IMR-90 (cell line): ENCODE measurements at regions of chr2 and their contacts with region 1.

Region 1: GRCh38 chr2:25738383-25739343 is 65.3 kb upstream of the DTNB start:
- DNase-seq: no peak
- ATAC-seq: peak; percentile 35; the same call in 1 of the 2 replicates
- H3K4me3 ChIP-seq: no peak overlapping the region
- H3K27ac ChIP-seq: no peak overlapping the region
- H3K4me1 ChIP-seq: no peaks in the 10 kb centered on the region
- H3K27me3 ChIP-seq: no peaks in the 10 kb centered on the region
- CTCF ChIP-seq: no peak
- POLR2A ChIP-seq: no peak
- RAD21 ChIP-seq: no peak

Region 2: GRCh38 chr2:25707927-25708590 is 30.6 kb before region 1 on chr2:
- CTCF ChIA-PET with region 1: no interaction called
- POLR2A ChIA-PET with region 1: interaction called, 10 read pairs
- dilution Hi-C with region 1: no loop called
- in situ Hi-C with region 1: no loop called
- intact Hi-C with region 1: no loop called
- DNase-seq: no peak
- ATAC-seq: no peak; the same call in 1 of the 2 replicates
- H3K4me3 ChIP-seq: no peak overlapping the region
- H3K27ac ChIP-seq: no peak overlapping the region
- H3K4me1 ChIP-seq: no peaks in the 10 kb centered on the region
- H3K27me3 ChIP-seq: peaks cover 6% of the 10 kb centered on the region
- CTCF ChIP-seq: no peak
- POLR2A ChIP-seq: no peak
- RAD21 ChIP-seq: no peak

Region 3: DNA sequence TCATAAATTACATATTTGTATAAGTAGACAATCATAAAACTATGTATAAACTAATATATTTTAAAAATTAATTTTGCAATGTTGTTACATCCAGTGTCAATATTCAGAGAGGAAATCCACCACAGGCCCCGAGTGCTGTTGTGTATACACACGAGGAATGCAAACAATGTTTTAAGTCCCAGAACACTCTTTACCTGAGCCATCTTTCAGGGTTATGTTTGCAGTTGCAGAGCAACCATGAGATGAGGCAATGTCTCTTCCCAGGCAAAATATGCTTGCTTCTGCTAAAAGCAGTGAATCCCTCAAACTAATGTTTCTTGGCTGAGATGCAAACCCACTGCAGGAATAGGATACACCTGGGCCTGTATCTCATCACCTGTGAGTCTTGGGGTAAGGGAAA is 48.4 kb after region 1 on chr2:
- CTCF ChIA-PET with region 1: no interaction called
- POLR2A ChIA-PET with region 1: no interaction called
- dilution Hi-C with region 1: no loop called
- in situ Hi-C with region 1: no loop called
- intact Hi-C with region 1: no loop called
- DNase-seq: no peak
- ATAC-seq: no peak
- H3K4me3 ChIP-seq: no peak overlapping the region
- H3K27ac ChIP-seq: no peak overlapping the region
- H3K4me1 ChIP-seq: peaks cover 1% of the 10 kb centered on the region; the same call in 1 of the 2 replicates
- H3K27me3 ChIP-seq: no peaks in the 10 kb centered on the region
- CTCF ChIP-seq: no peak
- POLR2A ChIP-seq: no peak
- RAD21 ChIP-seq: no peak

Region 4: DNA sequence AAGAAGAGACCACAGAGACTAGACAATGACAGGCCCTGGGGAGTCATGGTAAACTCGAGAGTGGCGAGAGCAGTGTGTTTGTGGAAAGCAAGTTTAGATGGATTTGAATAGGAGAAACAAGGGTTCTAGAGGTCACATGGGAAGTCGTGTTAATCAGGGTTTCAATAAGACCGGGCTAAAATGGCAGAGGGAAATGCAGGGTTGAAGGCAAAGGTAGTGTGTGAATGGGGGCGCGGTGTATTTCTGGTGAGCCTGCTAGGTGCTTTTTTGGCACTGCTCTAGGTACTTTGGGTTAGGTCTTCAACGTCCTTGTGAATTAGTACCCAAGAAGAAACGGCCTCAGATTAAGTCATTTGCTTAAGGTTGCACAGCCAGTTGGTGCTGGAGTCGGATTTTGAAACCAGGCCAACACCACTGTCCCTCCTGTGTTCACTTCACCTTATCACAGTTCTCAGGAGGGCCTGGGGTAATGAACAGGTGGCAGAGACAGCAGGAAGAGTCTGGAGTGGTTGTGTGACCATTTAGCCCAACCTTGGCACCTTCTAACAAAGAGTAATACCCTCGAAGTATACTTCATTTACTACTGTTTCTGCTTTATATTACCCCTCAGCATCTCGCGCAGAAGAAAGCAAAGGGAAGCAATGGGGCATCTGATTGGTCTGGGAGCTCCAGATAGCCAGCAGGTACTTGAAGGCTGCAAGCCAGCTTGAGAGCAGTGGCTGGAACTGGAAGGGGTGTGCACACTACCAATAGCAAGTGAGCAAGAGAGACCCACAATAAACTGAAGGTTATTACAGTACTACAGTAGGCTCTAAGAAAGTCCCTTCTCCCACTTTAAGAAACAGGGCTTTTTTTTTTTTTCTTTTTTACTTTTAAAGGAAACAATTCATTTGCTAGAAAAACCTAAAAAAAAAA is 400.9 kb after region 1 on chr2:
- CTCF ChIA-PET with region 1: no interaction called
- POLR2A ChIA-PET with region 1: no interaction called
- dilution Hi-C with region 1: no loop called
- in situ Hi-C with region 1: no loop called
- intact Hi-C with region 1: no loop called
- DNase-seq: no peak
- ATAC-seq: no peak
- H3K4me3 ChIP-seq: no peak overlapping the region
- H3K27ac ChIP-seq: no peak overlapping the region
- H3K4me1 ChIP-seq: no peaks in the 10 kb centered on the region
- H3K27me3 ChIP-seq: no peaks in the 10 kb centered on the region
- CTCF ChIP-seq: no peak
- POLR2A ChIP-seq: no peak
- RAD21 ChIP-seq: no peak